ENCODE measurements at regions of chr18 and their contacts with region 1.

Region 1: DNA sequence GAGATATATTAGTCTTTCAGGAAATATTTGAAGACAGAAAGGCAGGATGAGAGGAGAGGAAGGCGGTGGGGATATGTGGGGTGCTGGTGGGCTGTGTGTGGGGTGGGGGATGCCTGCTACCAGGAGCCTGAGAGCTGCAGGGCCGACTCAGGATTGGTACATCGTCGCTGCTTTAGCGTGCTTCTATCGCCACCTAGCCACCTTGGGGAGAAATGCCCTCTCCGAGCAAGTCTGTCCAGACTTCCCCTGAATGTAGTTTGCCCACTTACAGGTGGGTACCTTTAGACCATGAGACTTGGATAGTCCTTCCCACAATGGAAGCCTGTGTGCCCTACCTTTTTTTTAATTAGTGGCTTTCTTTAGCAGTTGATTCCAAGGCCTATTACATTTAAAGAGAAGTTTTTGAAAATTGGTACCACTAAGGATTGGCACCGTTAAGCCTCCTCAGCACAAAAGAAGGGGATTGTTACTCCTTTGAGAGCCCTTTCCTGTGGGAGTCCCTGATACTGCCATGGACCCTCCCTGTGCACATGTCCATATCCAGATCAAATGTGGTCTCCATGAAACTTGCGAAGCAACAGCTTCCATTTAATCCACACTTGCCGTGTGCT is 114.1 kb upstream of the NDUFV2 start:
- DNase-seq: peak; percentile 64 to 70
- H3K4me3 ChIP-seq: no peak overlapping the region
- H3K4me3 Mint-ChIP-seq: no peak overlapping the region
- H3K27ac Mint-ChIP-seq: no peak overlapping the region
- H3K4me1 ChIP-seq: no peaks in the 10 kb centered on the region
- H3K4me1 Mint-ChIP-seq: no peaks in the 10 kb centered on the region
- H3K27me3 ChIP-seq: no peaks in the 10 kb centered on the region
- H3K27me3 Mint-ChIP-seq: no peaks in the 10 kb centered on the region
- CTCF ChIP-seq: peak; percentile 90 to 91

Region 2: GRCh38 chr18:8501044-8501443 is 487.3 kb before region 1 on chr18:
- CTCF ChIA-PET with region 1: no interaction called
- POLR2A ChIA-PET with region 1: no interaction called
- intact Hi-C with region 1: no loop called
- DNase-seq: no peak
- H3K4me3 ChIP-seq: no peak overlapping the region
- H3K4me3 Mint-ChIP-seq: no peak overlapping the region
- H3K27ac Mint-ChIP-seq: no peak overlapping the region
- H3K4me1 ChIP-seq: no peaks in the 10 kb centered on the region
- H3K4me1 Mint-ChIP-seq: no peaks in the 10 kb centered on the region
- H3K27me3 ChIP-seq: no peaks in the 10 kb centered on the region; the same call in 1 of the 2 replicates
- H3K27me3 Mint-ChIP-seq: peaks cover 5% of the 10 kb centered on the region
- CTCF ChIP-seq: no peak

Region 3: GRCh38 chr18:8654503-8655451 is 333.6 kb before region 1 on chr18:
- CTCF ChIA-PET with region 1: interaction called, 13 read pairs
- POLR2A ChIA-PET with region 1: no interaction called
- intact Hi-C with region 1: loop called (anchors 1 kb)
- DNase-seq: no peak
- H3K4me3 ChIP-seq: no peak overlapping the region
- H3K4me3 Mint-ChIP-seq: no peak overlapping the region
- H3K27ac Mint-ChIP-seq: no peak overlapping the region
- H3K4me1 ChIP-seq: no peaks in the 10 kb centered on the region
- H3K4me1 Mint-ChIP-seq: peaks cover 7% of the 10 kb centered on the region
- H3K27me3 ChIP-seq: no peaks in the 10 kb centered on the region
- H3K27me3 Mint-ChIP-seq: no peaks in the 10 kb centered on the region
- CTCF ChIP-seq: peak; percentile 48 to 74

Region 4: DNA sequence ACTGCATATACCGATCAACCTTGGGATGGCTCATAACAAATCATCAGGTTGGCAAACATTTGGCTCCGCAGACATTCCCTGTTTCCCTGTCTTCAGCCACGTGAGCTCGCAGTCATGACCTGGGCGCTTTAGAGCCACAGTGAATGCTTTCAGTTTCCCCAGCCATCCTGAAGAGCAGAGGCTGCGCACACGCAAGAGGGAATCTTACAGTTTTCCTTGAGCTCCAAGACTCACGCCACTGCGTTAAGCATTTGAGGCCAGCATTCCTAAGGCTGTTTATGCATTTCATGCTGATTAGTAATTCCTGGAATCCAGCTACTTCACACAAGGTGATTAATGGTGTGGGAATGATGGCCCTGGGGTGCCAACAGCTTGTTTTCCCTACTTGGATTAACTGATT is 187.9 kb before region 1 on chr18:
- CTCF ChIA-PET with region 1: no interaction called
- POLR2A ChIA-PET with region 1: no interaction called
- intact Hi-C with region 1: loop called (anchors 10 kb)
- DNase-seq: peak in 1 of 2 experiments; percentile 16
- H3K4me3 ChIP-seq: no peak overlapping the region
- H3K4me3 Mint-ChIP-seq: no peak overlapping the region
- H3K27ac Mint-ChIP-seq: no peak overlapping the region
- H3K4me1 ChIP-seq: peaks cover 22% of the 10 kb centered on the region
- H3K4me1 Mint-ChIP-seq: peaks cover 2% of the 10 kb centered on the region
- H3K27me3 ChIP-seq: no peaks in the 10 kb centered on the region
- H3K27me3 Mint-ChIP-seq: no peaks in the 10 kb centered on the region
- CTCF ChIP-seq: no peak

Region 5: GRCh38 chr18:9048808-9049494 is 60.6 kb after region 1 on chr18:
- CTCF ChIA-PET with region 1: no interaction called
- POLR2A ChIA-PET with region 1: no interaction called
- intact Hi-C with region 1: no loop called
- DNase-seq: peak in 1 of 2 experiments; percentile 17
- H3K4me3 ChIP-seq: no peak overlapping the region
- H3K4me3 Mint-ChIP-seq: no peak overlapping the region
- H3K27ac Mint-ChIP-seq: no peak overlapping the region
- H3K4me1 ChIP-seq: peaks cover 19% of the 10 kb centered on the region
- H3K4me1 Mint-ChIP-seq: peaks cover 18% of the 10 kb centered on the region
- H3K27me3 ChIP-seq: no peaks in the 10 kb centered on the region; the same call in 1 of the 2 replicates
- H3K27me3 Mint-ChIP-seq: no peaks in the 10 kb centered on the region
- CTCF ChIP-seq: no peak

Region 6: GRCh38 chr18:9631814-9632496 is 643.6 kb after region 1 on chr18:
- CTCF ChIA-PET with region 1: no interaction called
- POLR2A ChIA-PET with region 1: no interaction called
- intact Hi-C with region 1: no loop called
- DNase-seq: no peak
- H3K4me3 ChIP-seq: no peak overlapping the region
- H3K4me3 Mint-ChIP-seq: no peak overlapping the region
- H3K27ac Mint-ChIP-seq: no peak overlapping the region
- H3K4me1 ChIP-seq: peaks cover 27% of the 10 kb centered on the region
- H3K4me1 Mint-ChIP-seq: peaks cover 15% of the 10 kb centered on the region
- H3K27me3 ChIP-seq: no peaks in the 10 kb centered on the region
- H3K27me3 Mint-ChIP-seq: no peaks in the 10 kb centered on the region
- CTCF ChIP-seq: no peak

Region 7: GRCh38 chr18:9643549-9643948 is 655.2 kb after region 1 on chr18:
- CTCF ChIA-PET with region 1: no interaction called
- POLR2A ChIA-PET with region 1: no interaction called
- intact Hi-C with region 1: no loop called
- DNase-seq: peak; percentile 76 to 83
- H3K4me3 ChIP-seq: no peak overlapping the region
- H3K4me3 Mint-ChIP-seq: no peak overlapping the region
- H3K27ac Mint-ChIP-seq: peak overlapping the region; percentile 90
- H3K4me1 ChIP-seq: peaks cover 39% of the 10 kb centered on the region
- H3K4me1 Mint-ChIP-seq: peaks cover 14% of the 10 kb centered on the region
- H3K27me3 ChIP-seq: no peaks in the 10 kb centered on the region
- H3K27me3 Mint-ChIP-seq: no peaks in the 10 kb centered on the region
- CTCF ChIP-seq: no peak

Measured in Caco-2 (cell line).